ENCODE measurements at regions of chr17 and their contacts with region 1.

Region 1: DNA sequence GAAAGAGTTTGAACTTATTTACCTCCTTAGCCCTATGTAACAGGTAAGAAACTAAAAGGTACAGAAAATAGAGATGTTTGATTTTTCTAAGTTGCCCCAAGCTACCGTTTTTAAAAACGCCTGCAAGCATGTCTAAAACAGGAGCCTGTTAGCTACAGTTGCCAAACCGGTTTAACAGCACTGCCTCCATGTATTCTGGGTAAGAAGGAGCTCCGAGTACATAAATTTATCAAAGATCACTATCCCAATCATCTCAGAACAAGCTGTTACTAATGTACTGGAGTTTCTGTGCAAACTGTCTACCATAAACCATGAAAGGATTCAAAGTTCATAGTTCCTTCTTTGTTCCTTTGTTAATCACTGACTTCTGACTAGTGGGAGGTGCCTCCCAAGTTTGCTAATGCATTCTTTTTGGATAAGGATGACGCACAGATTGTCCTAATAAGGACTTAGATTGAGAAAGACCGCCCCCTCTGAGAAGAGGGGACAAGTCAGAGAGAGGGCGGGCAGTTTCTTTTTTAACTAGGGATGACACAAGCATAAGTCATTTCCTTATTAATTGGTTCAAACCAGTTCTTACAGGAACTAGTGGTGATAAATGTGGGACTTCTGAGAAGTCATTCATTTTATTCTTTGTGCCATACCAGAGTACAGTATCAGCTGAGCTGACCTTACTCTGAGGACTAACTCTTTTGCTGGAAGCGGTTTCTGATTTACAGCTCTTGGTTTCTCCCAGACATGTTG is 55.3 kb downstream of the TUBD1 start:
- DNase-seq: peak; percentile 100
- H3K4me3 ChIP-seq: peak overlapping the region; percentile 55
- H3K27ac ChIP-seq: peak overlapping the region; percentile 100
- H3K4me1 ChIP-seq: peaks cover 34% of the 10 kb centered on the region
- H3K27me3 ChIP-seq: no peaks in the 10 kb centered on the region
- CTCF ChIP-seq: no peak

Region 2: DNA sequence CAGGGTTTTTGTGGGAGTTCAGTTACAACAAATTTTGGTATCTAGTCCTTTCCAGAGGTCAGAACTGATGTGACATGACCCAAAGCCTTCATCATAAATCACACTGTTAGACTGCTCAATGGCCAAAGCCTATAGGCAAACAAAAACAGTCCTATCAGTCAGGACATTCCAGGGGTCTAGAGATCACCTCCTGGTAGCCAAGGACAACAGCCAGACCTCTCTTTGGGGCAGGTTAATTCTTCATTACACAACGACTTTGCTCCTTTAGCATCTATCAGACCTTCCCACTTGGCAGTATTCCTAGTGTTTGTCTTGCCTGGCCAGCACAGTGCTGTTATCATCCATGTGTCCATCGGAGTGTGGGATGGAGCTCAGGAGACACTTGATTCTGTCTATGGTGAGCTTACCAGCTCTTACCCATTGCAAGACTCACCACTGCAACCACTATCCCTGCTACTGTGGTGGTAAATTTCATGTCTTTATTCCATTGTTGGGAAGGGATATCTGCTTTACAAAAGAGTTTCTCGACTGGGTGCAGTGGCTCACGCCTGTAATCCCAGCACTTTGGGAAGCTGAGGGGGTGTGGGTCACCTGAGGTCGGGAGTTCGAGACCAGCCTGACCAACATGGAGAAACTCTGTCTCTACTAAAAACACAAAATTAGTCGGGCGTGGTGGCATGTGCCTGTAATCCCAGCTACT is 367.5 kb before region 1 on chr17:
- CTCF ChIA-PET with region 1: no interaction called
- POLR2A ChIA-PET with region 1: no interaction called
- intact Hi-C with region 1: no loop called
- DNase-seq: no peak
- H3K4me3 ChIP-seq: no peak overlapping the region
- H3K27ac ChIP-seq: no peak overlapping the region
- H3K4me1 ChIP-seq: no peaks in the 10 kb centered on the region
- H3K27me3 ChIP-seq: no peaks in the 10 kb centered on the region
- CTCF ChIP-seq: no peak

Region 3: DNA sequence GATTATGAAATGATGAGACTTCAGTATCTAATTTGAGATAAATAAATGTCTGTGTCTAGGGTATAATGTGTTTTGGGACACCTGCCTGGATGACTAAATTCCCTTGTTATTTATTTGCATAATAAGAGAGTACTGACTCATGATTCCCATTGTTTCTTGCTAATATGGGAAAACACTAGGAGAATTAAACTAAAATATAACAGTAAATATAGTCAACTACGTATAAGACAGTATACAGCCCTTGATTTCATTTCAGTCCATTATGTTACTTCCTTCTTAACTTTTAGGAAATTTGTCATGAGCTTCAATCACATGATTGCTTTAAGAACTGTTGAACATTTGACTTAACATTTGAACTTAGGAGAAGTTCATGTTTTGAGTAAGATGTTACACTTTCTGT is 67.6 kb before region 1 on chr17:
- CTCF ChIA-PET with region 1: no interaction called
- POLR2A ChIA-PET with region 1: no interaction called
- intact Hi-C with region 1: loop called (anchors 5 kb)
- DNase-seq: no peak
- H3K4me3 ChIP-seq: no peak overlapping the region
- H3K27ac ChIP-seq: no peak overlapping the region
- H3K4me1 ChIP-seq: peaks cover 16% of the 10 kb centered on the region
- H3K27me3 ChIP-seq: no peaks in the 10 kb centered on the region
- CTCF ChIP-seq: no peak

Region 4: DNA sequence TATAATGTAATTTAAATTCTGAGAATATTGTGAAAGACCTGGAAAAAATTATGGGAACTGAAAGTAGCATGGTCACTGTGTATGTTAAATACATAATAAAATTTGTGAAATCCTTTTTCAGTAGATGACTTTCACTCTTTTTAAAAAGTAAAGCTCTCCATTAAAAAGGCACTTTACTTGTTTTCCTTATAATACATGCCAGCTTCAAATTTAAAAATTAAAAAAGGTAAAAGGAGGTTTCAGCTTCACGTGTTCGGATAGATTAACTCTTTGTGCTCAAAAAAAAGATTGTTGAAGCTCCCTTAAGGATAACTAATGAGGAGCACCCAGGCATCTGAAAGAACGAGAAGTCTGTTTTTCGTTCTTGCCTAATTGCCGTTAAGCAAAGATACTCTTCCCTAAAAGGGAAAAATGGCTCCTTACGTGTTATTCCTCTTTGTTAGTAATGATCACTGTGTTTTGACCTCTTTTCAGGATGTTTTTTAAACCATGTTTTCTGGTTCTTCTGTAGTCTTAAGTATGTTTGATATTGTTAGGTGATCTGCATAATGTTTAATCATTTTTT is 32.5 kb before region 1 on chr17:
- CTCF ChIA-PET with region 1: no interaction called
- POLR2A ChIA-PET with region 1: interaction called, 3 read pairs
- intact Hi-C with region 1: loop called (anchors 5 kb)
- DNase-seq: peak; percentile 87
- H3K4me3 ChIP-seq: peak overlapping the region; percentile 39
- H3K27ac ChIP-seq: peak overlapping the region; percentile 87
- H3K4me1 ChIP-seq: peaks cover 34% of the 10 kb centered on the region
- H3K27me3 ChIP-seq: no peaks in the 10 kb centered on the region
- CTCF ChIP-seq: no peak

Measured in A673 (cell line).